ENCODE measurements at regions of chr12 and their contacts with region 1.

Region 1: GRCh38 chr12:56224102-56224701 is at the start of gene NABP2:
- DNase-seq: peak; percentile 95 to 98
- H3K4me3 ChIP-seq: peak within 1 kb of the TSS; percentile 49 to 78 (median 66)
- H3K27ac ChIP-seq: peak within 1 kb of the TSS; percentile 59; the same call in 1 of the 2 replicates
- H3K4me1 ChIP-seq: peaks cover 3 to 13% (median 6%) of the 10 kb centered on the region in 4 experiments; a peak in 6 of 7 replicates
- H3K27me3 ChIP-seq: no peaks in the 10 kb centered on the region
- CTCF ChIP-seq: peak; percentile 70 to 79 (median 78)
- EP300 ChIP-seq: no peak
- POLR2A ChIP-seq: no peak
- RAD21 ChIP-seq: peak; percentile 39
- total RNA-seq, gene NABP2: 56.1 and 58.1 TPM in 2 replicates

Region 2: DNA sequence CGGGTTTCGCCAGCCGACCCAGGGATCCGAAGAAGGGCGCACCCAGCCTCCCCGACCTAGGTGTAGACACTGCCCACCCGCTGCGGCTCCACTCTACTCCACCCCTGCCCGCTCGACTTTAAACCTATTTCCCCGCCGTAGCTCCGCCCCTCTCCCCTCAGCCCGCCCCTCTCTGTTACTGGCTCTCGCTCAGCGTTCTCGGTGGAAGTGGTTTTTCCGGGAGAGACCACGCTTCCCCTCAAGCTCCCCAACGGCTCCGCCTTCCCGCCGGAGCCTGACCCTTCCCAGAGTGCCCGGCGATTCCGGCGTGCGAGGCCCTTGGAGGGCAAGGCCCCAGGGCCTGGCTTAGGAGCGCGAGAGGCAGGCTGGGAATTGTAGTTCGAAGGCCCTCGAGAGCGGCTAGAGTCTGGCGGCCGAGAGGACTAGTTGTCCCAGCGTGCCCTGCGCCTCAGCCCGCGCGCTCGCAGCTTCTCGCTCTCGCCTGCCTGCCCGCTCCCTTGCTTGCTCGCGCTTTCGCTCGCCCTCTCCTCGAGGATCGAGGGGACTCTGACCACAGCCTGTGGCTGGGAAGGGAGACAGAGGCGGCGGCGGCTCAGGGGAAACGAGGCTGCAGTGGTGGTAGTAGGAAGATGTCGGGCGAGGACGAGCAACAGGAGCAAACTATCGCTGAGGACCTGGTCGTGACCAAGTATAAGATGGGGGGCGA is 119.9 kb before region 1 on chr12 and contains the start of gene PA2G4:
- CTCF ChIA-PET with region 1: interaction called, 3 read pairs
- POLR2A ChIA-PET with region 1: interaction called, 15 read pairs
- DNase-seq: peak; percentile 95 to 99
- H3K4me3 ChIP-seq: peak within 1 kb of the TSS; percentile 81 to 95 (median 92)
- H3K27ac ChIP-seq: peak within 1 kb of the TSS; percentile 88; the same call in 1 of the 2 replicates
- H3K4me1 ChIP-seq: peaks cover 0 to 9% (median 3%) of the 10 kb centered on the region in 4 experiments; a peak in 5 of 7 replicates
- H3K27me3 ChIP-seq: no peaks in the 10 kb centered on the region
- CTCF ChIP-seq: no peak
- EP300 ChIP-seq: no peak
- POLR2A ChIP-seq: peak; percentile 69 to 70; a peak in 2 of 3 replicates
- RAD21 ChIP-seq: no peak
- total RNA-seq, gene PA2G4: 237 and 242 TPM in 2 replicates

Region 3: GRCh38 chr12:56152318-56153033 is 71.7 kb before region 1 on chr12 and contains the start of gene MYL6B:
- CTCF ChIA-PET with region 1: interaction called, 3 read pairs
- POLR2A ChIA-PET with region 1: interaction called, 58 read pairs
- DNase-seq: peak; percentile 66 to 91
- H3K4me3 ChIP-seq: peak within 1 kb of the TSS; percentile 66 to 84 (median 82)
- H3K27ac ChIP-seq: no peak within 1 kb of the TSS
- H3K4me1 ChIP-seq: peaks cover 5 to 13% (median 9%) of the 10 kb centered on the region in 4 experiments; a peak in 6 of 7 replicates
- H3K27me3 ChIP-seq: no peaks in the 10 kb centered on the region; a peak in 1 of 7 replicates
- CTCF ChIP-seq: no peak
- EP300 ChIP-seq: no peak
- POLR2A ChIP-seq: peak; percentile 46 to 59; a peak in 1 of 3 replicates
- RAD21 ChIP-seq: no peak
- total RNA-seq, gene MYL6B: 162 and 163 TPM in 2 replicates

Region 4: DNA sequence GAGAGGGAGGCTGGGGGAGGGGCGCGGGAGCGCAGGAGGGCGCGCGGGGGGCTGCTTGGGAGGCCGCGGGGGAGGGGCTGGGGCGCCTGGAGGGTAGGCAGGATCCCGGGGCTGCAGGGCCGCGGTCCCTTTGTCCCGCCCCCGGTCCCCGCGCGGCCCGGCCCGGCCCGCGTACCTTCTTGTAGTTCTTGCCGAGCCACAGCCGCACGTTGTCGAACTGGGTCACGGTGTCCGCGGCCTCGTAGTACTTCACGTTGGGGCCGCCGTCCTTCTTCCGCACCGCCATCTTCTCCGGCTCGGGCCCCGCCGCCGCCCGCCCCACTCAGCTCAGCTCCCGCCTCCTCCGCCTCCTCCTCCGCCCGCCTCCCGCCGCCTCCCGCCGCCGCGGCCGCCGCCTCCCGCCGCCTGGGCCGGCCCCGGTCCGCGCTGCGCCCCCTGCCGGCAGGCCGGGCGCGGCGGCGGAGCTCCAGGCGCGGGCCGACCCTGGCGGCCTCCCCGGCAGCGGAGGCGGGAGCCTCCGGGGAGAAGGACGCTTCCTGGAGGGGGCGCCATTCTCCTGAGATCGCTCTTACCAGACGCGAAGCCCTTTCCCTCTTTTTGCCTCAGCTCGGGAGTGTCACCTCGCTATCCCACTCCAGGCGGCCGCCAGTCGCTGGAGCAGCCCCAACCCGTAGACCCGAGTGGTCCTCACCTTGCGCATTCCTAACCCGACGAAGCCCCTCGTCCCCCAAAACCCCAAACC is 34.9 kb before region 1 on chr12 and contains the start of gene SMARCC2:
- CTCF ChIA-PET with region 1: interaction called, 51 read pairs
- POLR2A ChIA-PET with region 1: interaction called, 203 read pairs
- DNase-seq: peak; percentile 75 to 92
- H3K4me3 ChIP-seq: peak within 1 kb of the TSS; percentile 82 to 95 (median 90)
- H3K27ac ChIP-seq: peak within 1 kb of the TSS; percentile 81
- H3K4me1 ChIP-seq: peaks cover 2 to 8% (median 4%) of the 10 kb centered on the region in 4 experiments; a peak in 3 of 7 replicates
- H3K27me3 ChIP-seq: no peaks in the 10 kb centered on the region
- CTCF ChIP-seq: peak; percentile 75 to 96 (median 84)
- EP300 ChIP-seq: peak in 1 of 2 experiments; percentile 26; a peak in 1 of 3 replicates
- POLR2A ChIP-seq: peak; percentile 24 to 65
- RAD21 ChIP-seq: peak; percentile 26 to 48; a peak in 3 of 4 replicates
- total RNA-seq, gene SMARCC2: 66.3 and 78.5 TPM in 2 replicates

Region 5: DNA sequence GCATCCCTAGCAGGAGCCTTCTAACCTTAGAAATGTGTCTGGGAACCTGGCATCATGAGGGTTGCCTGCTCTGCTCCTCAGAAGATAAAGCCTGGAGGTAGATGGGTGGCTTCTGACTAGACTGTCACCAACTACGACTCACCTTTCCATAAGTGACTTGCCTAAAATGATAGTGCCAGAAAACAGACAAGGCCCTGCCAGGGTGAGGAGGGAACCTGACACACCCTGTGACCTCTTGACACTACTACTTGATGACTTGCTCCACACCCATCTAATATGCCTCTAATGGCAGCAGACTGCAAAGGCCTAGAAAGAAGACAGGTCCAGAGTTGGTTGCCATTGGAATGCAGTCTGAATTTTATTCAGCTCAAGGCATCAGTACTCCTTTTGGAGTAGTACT is 11.8 kb before region 1 on chr12:
- CTCF ChIA-PET with region 1: interaction called, 89 read pairs
- POLR2A ChIA-PET with region 1: interaction called, 203 read pairs
- DNase-seq: no peak
- H3K4me3 ChIP-seq: no peak overlapping the region
- H3K27ac ChIP-seq: no peak overlapping the region
- H3K4me1 ChIP-seq: no peaks in the 10 kb centered on the region
- H3K27me3 ChIP-seq: no peaks in the 10 kb centered on the region
- CTCF ChIP-seq: no peak
- EP300 ChIP-seq: no peak
- POLR2A ChIP-seq: no peak
- RAD21 ChIP-seq: no peak

Region 6: GRCh38 chr12:56243731-56244181 is 19.6 kb after region 1 on chr12:
- CTCF ChIA-PET with region 1: interaction called, 4 read pairs
- POLR2A ChIA-PET with region 1: interaction called, 15 read pairs
- DNase-seq: no peak
- H3K4me3 ChIP-seq: no peak overlapping the region
- H3K27ac ChIP-seq: no peak overlapping the region
- H3K4me1 ChIP-seq: no peaks in the 10 kb centered on the region
- H3K27me3 ChIP-seq: no peaks in the 10 kb centered on the region
- CTCF ChIP-seq: no peak
- EP300 ChIP-seq: no peak
- POLR2A ChIP-seq: no peak
- RAD21 ChIP-seq: no peak

Region 7: DNA sequence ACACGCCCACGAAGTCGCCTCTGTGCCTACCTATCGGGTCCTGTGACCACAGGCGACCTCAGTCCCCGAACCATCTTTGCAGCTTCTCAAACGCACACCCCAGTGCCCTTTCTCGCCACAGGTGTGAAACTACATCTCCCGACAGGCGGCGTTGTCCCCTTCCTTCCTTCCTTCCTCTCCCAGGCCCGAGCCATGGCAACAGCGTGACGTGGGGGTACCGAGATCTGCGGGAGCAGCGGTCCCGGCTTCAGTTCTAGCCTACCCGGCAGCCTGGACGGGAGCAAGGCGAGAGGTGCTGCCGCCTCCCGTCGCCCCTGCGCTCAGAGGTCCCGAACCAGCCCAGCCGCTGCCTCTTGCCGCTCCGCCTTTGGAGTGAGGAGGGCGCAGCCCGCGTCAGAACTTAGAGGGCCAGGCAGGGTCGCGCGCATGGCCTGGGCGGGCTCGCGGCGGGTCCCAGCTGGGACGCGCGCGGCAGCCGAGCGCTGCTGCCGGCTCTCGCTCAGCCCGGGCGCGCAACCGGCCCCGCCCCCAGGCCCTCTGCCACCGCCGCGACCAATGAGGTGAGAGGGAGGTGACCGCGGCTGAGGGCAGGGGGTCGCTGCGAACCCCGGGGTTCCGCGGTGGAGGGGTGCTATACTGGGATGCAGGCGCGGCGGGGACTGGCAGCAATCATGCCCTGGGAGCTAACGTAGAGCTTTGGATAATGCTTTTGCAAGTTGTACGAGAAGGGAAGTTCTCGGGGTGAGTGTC is 42.7 kb after region 1 on chr12 and contains the start of gene COQ10A:
- CTCF ChIA-PET with region 1: interaction called, 13 read pairs
- POLR2A ChIA-PET with region 1: interaction called, 22 read pairs
- DNase-seq: peak; percentile 51 to 95
- H3K4me3 ChIP-seq: peak within 1 kb of the TSS; percentile 82 to 88 (median 87)
- H3K27ac ChIP-seq: peak within 1 kb of the TSS; percentile 84
- H3K4me1 ChIP-seq: peaks cover 0 to 9% (median 3%) of the 10 kb centered on the region in 4 experiments; a peak in 4 of 7 replicates
- H3K27me3 ChIP-seq: no peaks in the 10 kb centered on the region
- CTCF ChIP-seq: peak; percentile 41 to 71 (median 70)
- EP300 ChIP-seq: no peak
- POLR2A ChIP-seq: peak; percentile 51 to 85
- RAD21 ChIP-seq: peak in 1 of 2 experiments; percentile 1; a peak in 1 of 4 replicates
- total RNA-seq, gene COQ10A: 21.8 and 22.8 TPM in 2 replicates